ENCODE measurements at regions of chr13 and their contacts with region 1.

Region 1: GRCh38 chr13:20495082-20496023 is 30.3 kb downstream of the CRYL1 start:
- DNase-seq: peak in 7 of 10 donors; percentile 44 to 81 (median 54)
- H3K4me3 ChIP-seq: peak overlapping the region in 40 of 59 donors; percentile 0 to 46 (median 22)
- H3K27ac ChIP-seq: peak overlapping the region; percentile 19 to 90 (median 75)
- H3K27me3 ChIP-seq: no peaks in the 10 kb centered on the region
- CTCF ChIP-seq: peak; percentile 82 to 99 (median 95)

Region 2: GRCh38 chr13:20525690-20526544 is 30.6 kb after region 1 on chr13 and contains the start of gene CRYL1:
- intact Hi-C with region 1: loop called in 1 of 2 experiments (anchors 2 kb)
- DNase-seq: peak; percentile 75 to 94 (median 83)
- H3K4me3 ChIP-seq: peak within 1 kb of the TSS; percentile 49 to 99 (median 90)
- H3K27ac ChIP-seq: peak within 1 kb of the TSS; percentile 77 to 99 (median 96)
- H3K27me3 ChIP-seq: no peaks in the 10 kb centered on the region
- CTCF ChIP-seq: peak in 8 of 56 donors; percentile 4 to 36 (median 11)
- total RNA-seq, gene CRYL1: 41.1 to 127 (median 74.6) TPM

Region 3: GRCh38 chr13:20672772-20673171 is 177.4 kb after region 1 on chr13:
- intact Hi-C with region 1: no loop called
- DNase-seq: no peak
- H3K4me3 ChIP-seq: no peak overlapping the region
- H3K27ac ChIP-seq: peak overlapping the region in 49 of 59 donors; percentile 5 to 85 (median 71)
- H3K27me3 ChIP-seq: no peaks in the 10 kb centered on the region
- CTCF ChIP-seq: no peak

Region 4: DNA sequence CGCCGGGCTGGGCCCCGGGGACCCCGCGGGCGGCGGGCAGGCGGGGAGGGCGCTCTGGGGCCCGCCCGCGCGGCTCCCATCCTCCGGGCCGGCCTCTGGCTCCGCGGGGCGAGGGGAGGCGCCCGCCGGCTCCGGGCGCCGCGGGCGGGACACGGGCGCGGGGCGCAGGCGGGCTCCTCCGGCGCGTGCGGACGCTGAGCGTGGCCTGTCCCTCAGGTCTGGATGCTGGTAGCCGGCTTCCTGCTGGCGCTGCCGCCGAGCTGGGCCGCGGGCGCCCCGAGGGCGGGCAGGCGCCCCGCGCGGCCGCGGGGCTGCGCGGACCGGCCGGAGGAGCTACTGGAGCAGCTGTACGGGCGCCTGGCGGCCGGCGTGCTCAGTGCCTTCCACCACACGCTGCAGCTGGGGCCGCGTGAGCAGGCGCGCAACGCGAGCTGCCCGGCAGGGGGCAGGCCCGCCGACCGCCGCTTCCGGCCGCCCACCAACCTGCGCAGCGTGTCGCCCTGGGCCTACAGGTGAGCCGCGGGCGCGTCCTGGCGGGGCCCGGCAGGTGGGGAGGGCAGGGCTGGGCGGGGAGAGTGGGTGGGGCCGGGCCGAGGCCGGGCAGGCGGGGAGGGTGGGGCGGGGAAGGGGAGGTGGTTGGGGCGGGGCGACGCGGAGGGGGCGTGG is 208.6 kb after region 1 on chr13:
- intact Hi-C with region 1: loop called in 1 of 2 experiments (anchors 2 kb)
- DNase-seq: peak in 9 of 10 donors; percentile 46 to 84 (median 59)
- H3K4me3 ChIP-seq: peak overlapping the region in 57 of 59 donors; percentile 21 to 90 (median 52)
- H3K27ac ChIP-seq: peak overlapping the region in 37 of 59 donors; percentile 13 to 86 (median 71)
- H3K27me3 ChIP-seq: no peaks in the 10 kb centered on the region
- CTCF ChIP-seq: peak in 45 of 56 donors; percentile 15 to 60 (median 40)

Region 5: DNA sequence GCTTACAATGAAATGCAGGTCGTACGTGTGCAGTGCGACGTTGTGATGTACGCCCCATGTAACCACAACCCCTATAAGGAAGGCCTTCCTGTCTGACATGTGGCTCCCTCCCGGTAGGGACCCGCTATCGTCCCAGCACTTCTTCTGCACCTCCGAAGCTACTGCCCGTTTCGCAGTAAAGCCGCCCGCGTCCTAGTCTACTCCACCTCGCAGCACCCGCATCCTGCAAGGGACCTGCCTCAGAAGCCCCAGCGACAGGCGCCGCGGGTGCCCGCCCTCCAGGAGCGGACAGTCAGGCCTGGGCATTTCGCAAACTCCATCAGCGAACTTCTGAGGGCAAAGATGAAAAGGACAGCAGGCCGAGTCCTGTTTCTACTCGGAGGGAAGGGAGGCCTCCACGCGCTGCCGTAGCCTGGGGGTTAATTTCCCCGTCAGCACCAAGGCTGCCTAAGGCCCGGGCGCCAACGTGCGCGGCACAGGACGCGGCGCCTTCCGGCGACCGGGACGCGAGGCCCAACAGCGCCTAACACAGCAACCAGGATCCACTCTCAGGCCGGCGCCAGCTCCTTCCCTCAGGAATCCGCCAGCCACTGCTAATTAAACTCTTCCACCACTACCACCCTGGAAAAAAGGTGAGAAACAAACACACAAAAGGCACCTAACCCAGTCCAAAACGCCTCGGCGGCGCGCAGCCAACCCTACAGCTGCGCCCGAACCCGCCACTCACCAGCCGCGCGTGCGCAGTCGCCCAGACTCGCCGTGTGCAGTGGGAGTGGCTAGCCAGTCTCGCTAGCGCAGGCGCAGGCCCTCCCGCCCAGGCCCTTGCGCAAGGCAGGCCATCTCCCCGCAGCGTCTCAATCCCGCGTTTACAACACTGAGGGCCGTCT is 278.1 kb after region 1 on chr13 and contains the start of gene EEF1AKMT1:
- intact Hi-C with region 1: loop called in 1 of 2 experiments (anchors 5 kb)
- DNase-seq: peak; percentile 80 to 93 (median 88)
- H3K4me3 ChIP-seq: peak within 1 kb of the TSS; percentile 45 to 92 (median 79)
- H3K27ac ChIP-seq: peak within 1 kb of the TSS; percentile 35 to 95 (median 88)
- H3K27me3 ChIP-seq: no peaks in the 10 kb centered on the region
- CTCF ChIP-seq: peak in 26 of 56 donors; percentile 2 to 49 (median 28)
- total RNA-seq, gene EEF1AKMT1: 6.6 to 19.0 (median 12.2) TPM

Region 6: GRCh38 chr13:20924758-20925394 is 429.5 kb after region 1 on chr13:
- intact Hi-C with region 1: loop called (anchors 2 to 10 kb)
- DNase-seq: peak; percentile 52 to 94 (median 75)
- H3K4me3 ChIP-seq: no peak overlapping the region
- H3K27ac ChIP-seq: peak overlapping the region in 2 of 59 donors; percentile 21 to 55
- H3K27me3 ChIP-seq: no peaks in the 10 kb centered on the region
- CTCF ChIP-seq: peak; percentile 70 to 94 (median 81)